Heart right ventricle (tissue), 16 donors: ENCODE measurements at regions of chr12 and their contacts with region 1.

Region 1: DNA sequence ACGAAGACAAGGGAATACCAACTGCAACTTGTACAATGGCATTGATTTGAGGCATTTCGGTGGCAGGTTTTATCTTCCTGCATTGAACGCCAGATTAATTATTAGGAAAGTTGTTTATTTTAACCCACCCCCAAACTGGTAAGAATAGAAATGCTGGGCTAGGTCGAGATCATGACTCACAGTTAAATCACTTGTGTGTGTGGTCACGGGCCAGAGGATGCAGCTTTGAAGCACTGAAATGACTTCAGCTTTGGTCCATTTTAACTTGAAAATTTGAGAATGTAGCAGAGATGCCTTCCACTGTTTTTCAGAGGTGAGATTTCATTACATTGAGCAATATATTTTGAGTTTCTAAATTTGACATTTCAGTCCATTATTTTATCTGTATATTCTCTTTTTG is 23.6 kb upstream of the KCNH3 start:
- DNase-seq: no peak
- ATAC-seq: no peak
- H3K4me3 ChIP-seq: no peak overlapping the region
- H3K27ac ChIP-seq: no peak overlapping the region
- H3K4me1 ChIP-seq: peaks cover 0 to 4% (median 0%) of the 10 kb centered on the region in 9 donors
- H3K27me3 ChIP-seq: no peaks in the 10 kb centered on the region
- CTCF ChIP-seq: no peak

Region 2: DNA sequence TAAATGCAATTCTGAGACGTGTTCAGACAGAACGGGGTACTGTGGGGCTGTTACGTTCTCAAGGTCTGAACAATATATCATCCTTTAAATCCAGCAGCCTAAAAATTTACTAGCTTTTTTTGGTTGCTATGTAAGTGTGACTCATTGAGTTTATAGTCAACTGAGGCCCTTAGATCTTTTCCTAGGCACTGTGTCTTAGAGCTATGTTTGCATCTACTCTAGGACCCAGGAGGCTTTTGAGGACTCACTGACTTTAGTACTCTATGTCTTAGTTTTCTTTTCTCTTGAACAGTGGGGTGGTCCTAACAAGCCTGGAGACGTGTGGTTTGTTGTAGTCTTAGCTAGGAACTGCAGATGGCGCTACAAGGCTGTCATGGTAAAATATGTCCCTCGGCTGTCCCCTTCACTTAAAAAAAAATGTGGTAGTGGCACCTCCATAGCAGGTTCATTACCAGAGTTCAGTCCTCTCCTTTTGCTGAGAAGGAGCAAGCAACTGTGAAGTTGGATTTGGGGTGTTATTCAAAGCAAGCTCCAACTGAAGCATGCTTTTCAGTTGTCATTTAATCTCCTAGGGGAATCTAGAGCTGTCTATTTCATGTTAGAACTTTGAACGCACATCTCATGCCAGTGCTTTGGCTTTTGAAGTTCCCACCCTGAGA is 156.7 kb before region 1 on chr12:
- intact Hi-C with region 1: loop called (anchors 1 to 2 kb)
- DNase-seq: peak in 1 of 2 donors; percentile 58
- ATAC-seq: peak; percentile 74 to 91 (median 80)
- H3K4me3 ChIP-seq: no peak overlapping the region
- H3K27ac ChIP-seq: no peak overlapping the region
- H3K4me1 ChIP-seq: peaks cover 0 to 6% (median 0%) of the 10 kb centered on the region in 9 donors
- H3K27me3 ChIP-seq: peaks cover 0 to 33% (median 5%) of the 10 kb centered on the region in 7 donors
- CTCF ChIP-seq: peak; percentile 71 to 90 (median 83)

Region 3: GRCh38 chr12:50132505-50133135 is 617.4 kb after region 1 on chr12:
- intact Hi-C with region 1: no loop called
- DNase-seq: no peak
- ATAC-seq: no peak
- H3K4me3 ChIP-seq: no peak overlapping the region
- H3K27ac ChIP-seq: no peak overlapping the region
- H3K4me1 ChIP-seq: peaks cover 0 to 35% (median 4%) of the 10 kb centered on the region in 9 donors
- H3K27me3 ChIP-seq: no peaks in the 10 kb centered on the region
- CTCF ChIP-seq: peak in 8 of 9 donors; percentile 40 to 73 (median 47)